ENCODE measurements at regions of chr4 and their contacts with region 1.

Region 1: DNA sequence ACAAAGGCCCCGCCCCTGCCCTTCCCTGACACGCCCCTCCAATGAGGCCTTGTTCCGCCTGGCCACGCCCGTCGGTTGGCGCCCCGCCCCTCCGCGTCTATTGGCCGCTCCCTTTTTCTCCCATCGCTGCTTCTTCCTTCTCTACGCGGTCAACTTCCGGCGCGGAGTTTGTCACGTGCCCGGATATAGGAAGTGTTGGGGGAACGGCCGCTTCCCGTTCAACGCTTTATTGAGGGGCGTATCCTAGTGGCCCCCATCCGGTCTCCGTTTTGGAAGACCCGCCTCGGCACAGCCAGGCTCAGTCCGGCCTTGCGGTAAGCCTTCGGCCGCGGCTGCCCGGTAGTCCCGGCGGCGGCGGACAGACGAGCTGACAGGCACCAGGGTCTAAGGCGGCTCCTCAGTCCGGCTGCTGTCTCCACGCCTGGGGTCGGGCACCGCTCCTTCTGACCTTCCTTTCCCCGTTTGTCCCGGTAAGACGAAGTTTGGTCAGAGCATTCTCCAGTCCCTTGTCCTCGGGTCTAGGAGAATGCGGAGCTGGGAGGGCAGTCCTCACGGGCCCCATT is at the start of gene EXOC1:
- DNase-seq: peak; percentile 93 to 98 (median 94)
- ATAC-seq: peak; percentile 99
- H3K4me3 ChIP-seq: peak within 1 kb of the TSS; percentile 84
- H3K4me3 Mint-ChIP-seq: peak within 1 kb of the TSS in 2 of 10 donors; percentile 34 to 69
- H3K27ac ChIP-seq: peak within 1 kb of the TSS; percentile 87
- H3K27ac Mint-ChIP-seq: peak within 1 kb of the TSS in 7 of 9 donors; percentile 75 to 94 (median 90)
- H3K4me1 ChIP-seq: peaks cover 26 to 31% of the 10 kb centered on the region in 2 donors
- H3K4me1 Mint-ChIP-seq: peaks cover 22 to 48% (median 42%) of the 10 kb centered on the region in 7 donors
- H3K27me3 ChIP-seq: no peaks in the 10 kb centered on the region
- H3K27me3 Mint-ChIP-seq: no peaks in the 10 kb centered on the region
- total RNA-seq, gene EXOC1: 20.3 to 46.7 (median 32.1) TPM

Region 2: DNA sequence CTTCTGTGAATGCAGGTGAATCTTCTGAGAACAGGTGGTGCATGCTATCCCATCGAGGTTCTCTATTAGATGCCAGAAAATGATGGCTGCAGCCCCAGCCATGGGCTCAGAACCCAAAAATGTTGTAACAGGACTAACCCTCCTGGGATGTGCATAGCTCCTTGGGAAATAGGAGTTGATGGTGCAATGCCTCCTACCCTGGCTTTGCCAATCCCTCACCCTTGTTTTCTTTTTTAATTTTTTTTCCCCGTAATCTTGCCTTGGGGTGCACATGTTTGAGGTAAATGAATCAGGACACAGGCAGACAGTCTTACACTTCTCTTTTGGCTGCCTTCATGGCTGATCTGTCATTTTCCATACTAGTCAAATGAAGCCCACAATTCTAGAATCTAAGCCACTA is 1099.2 kb before region 1 on chr4:
- CTCF ChIA-PET with region 1: no interaction called
- POLR2A ChIA-PET with region 1: no interaction called
- intact Hi-C with region 1: no loop called
- DNase-seq: no peak
- ATAC-seq: no peak
- H3K4me3 ChIP-seq: no peak overlapping the region
- H3K4me3 Mint-ChIP-seq: no peak overlapping the region
- H3K27ac ChIP-seq: no peak overlapping the region
- H3K27ac Mint-ChIP-seq: no peak overlapping the region
- H3K4me1 ChIP-seq: no peaks in the 10 kb centered on the region
- H3K4me1 Mint-ChIP-seq: no peaks in the 10 kb centered on the region
- H3K27me3 ChIP-seq: no peaks in the 10 kb centered on the region
- H3K27me3 Mint-ChIP-seq: peaks cover 0 to 3% (median 0%) of the 10 kb centered on the region in 5 donors

Region 3: GRCh38 chr4:55345980-55346850 is 507.4 kb before region 1 on chr4 and contains the start of gene SRD5A3:
- CTCF ChIA-PET with region 1: no interaction called
- POLR2A ChIA-PET with region 1: no interaction called
- intact Hi-C with region 1: loop called (anchors 1 to 2 kb)
- DNase-seq: peak; percentile 53 to 92 (median 72)
- ATAC-seq: peak; percentile 97
- H3K4me3 ChIP-seq: peak within 1 kb of the TSS; percentile 79
- H3K4me3 Mint-ChIP-seq: peak within 1 kb of the TSS; percentile 83 to 94 (median 90)
- H3K27ac ChIP-seq: peak within 1 kb of the TSS; percentile 69
- H3K27ac Mint-ChIP-seq: peak within 1 kb of the TSS; percentile 70 to 91 (median 87)
- H3K4me1 ChIP-seq: peaks cover 6 to 8% of the 10 kb centered on the region in 2 donors
- H3K4me1 Mint-ChIP-seq: peaks cover 8 to 23% (median 19%) of the 10 kb centered on the region in 7 donors
- H3K27me3 ChIP-seq: no peaks in the 10 kb centered on the region
- H3K27me3 Mint-ChIP-seq: no peaks in the 10 kb centered on the region
- total RNA-seq, gene SRD5A3: 1.9 to 8.5 (median 4.5) TPM

Region 4: DNA sequence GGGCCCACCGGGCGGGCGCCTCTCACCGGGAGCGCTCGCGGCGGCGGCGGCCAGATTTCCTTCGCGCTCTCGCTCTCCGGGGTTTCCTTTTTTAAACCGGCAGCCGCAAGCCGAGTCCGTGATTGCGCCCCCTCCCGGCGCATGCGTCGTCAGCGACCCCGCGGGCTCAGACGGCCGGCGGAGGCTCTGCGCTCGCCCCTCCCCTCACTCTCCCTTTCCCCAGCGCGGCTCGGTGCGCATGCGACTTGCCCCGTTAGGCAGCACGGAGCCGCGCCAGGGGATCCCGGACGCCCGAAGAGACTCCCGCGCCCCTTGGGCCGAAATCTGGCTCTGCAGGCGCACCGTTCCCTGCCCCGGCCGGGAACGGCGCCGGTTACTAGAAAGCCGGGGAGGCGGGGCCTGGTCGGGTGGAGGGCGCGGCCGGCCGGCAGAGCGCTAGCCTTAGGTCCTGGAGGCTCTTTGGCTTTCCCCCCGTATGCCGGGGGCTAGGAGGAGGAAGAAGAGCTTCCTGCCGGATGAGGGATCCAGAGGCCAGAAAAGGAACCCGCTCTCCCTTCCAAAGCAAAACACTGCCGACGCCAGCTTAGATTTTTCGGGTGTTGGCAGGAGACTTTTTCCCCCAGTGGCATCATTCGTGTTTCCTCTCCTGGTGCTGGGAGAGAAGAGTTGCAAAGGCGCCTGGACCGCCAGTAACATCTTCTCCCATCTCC is 306.7 kb before region 1 on chr4 and contains the start of gene CLOCK:
- CTCF ChIA-PET with region 1: no interaction called
- POLR2A ChIA-PET with region 1: interaction called, 3 read pairs
- intact Hi-C with region 1: loop called (anchors 1 kb)
- DNase-seq: peak; percentile 79 to 87 (median 83)
- ATAC-seq: peak; percentile 82
- H3K4me3 ChIP-seq: peak within 1 kb of the TSS; percentile 82
- H3K4me3 Mint-ChIP-seq: peak within 1 kb of the TSS; percentile 88 to 96 (median 94)
- H3K27ac ChIP-seq: peak within 1 kb of the TSS; percentile 84
- H3K27ac Mint-ChIP-seq: peak within 1 kb of the TSS; percentile 87 to 92 (median 90)
- H3K4me1 ChIP-seq: peaks cover 5 to 8% of the 10 kb centered on the region in 2 donors
- H3K4me1 Mint-ChIP-seq: peaks cover 21 to 57% (median 40%) of the 10 kb centered on the region in 7 donors
- H3K27me3 ChIP-seq: no peaks in the 10 kb centered on the region
- H3K27me3 Mint-ChIP-seq: peaks cover 0 to 29% (median 0%) of the 10 kb centered on the region in 5 donors
- total RNA-seq, gene CLOCK: 7.9 to 12.6 (median 8.9) TPM

Region 5: GRCh38 chr4:55781812-55782211 is 71.8 kb before region 1 on chr4:
- CTCF ChIA-PET with region 1: no interaction called
- POLR2A ChIA-PET with region 1: no interaction called
- intact Hi-C with region 1: no loop called
- DNase-seq: no peak
- ATAC-seq: no peak
- H3K4me3 ChIP-seq: no peak overlapping the region
- H3K4me3 Mint-ChIP-seq: no peak overlapping the region
- H3K27ac ChIP-seq: no peak overlapping the region
- H3K27ac Mint-ChIP-seq: no peak overlapping the region
- H3K4me1 ChIP-seq: no peaks in the 10 kb centered on the region
- H3K4me1 Mint-ChIP-seq: no peaks in the 10 kb centered on the region
- H3K27me3 ChIP-seq: no peaks in the 10 kb centered on the region
- H3K27me3 Mint-ChIP-seq: peaks cover 0 to 19% (median 7%) of the 10 kb centered on the region in 5 donors

Region 6: GRCh38 chr4:56048702-56049431 is 195.3 kb after region 1 on chr4:
- CTCF ChIA-PET with region 1: no interaction called
- POLR2A ChIA-PET with region 1: no interaction called
- intact Hi-C with region 1: loop called in 1 of 2 experiments (anchors 10 kb)
- DNase-seq: peak in 6 of 9 donors; percentile 7 to 72 (median 16)
- ATAC-seq: peak; percentile 85
- H3K4me3 ChIP-seq: no peak overlapping the region
- H3K4me3 Mint-ChIP-seq: peak overlapping the region; percentile 55 to 78 (median 73)
- H3K27ac ChIP-seq: no peak overlapping the region
- H3K27ac Mint-ChIP-seq: no peak overlapping the region
- H3K4me1 ChIP-seq: peaks cover 3 to 6% of the 10 kb centered on the region in 2 donors
- H3K4me1 Mint-ChIP-seq: peaks cover 8 to 18% (median 12%) of the 10 kb centered on the region in 7 donors
- H3K27me3 ChIP-seq: peaks cover 6 to 10% of the 10 kb centered on the region in 2 donors
- H3K27me3 Mint-ChIP-seq: peaks cover 43 to 64% (median 55%) of the 10 kb centered on the region in 5 donors

Region 7: DNA sequence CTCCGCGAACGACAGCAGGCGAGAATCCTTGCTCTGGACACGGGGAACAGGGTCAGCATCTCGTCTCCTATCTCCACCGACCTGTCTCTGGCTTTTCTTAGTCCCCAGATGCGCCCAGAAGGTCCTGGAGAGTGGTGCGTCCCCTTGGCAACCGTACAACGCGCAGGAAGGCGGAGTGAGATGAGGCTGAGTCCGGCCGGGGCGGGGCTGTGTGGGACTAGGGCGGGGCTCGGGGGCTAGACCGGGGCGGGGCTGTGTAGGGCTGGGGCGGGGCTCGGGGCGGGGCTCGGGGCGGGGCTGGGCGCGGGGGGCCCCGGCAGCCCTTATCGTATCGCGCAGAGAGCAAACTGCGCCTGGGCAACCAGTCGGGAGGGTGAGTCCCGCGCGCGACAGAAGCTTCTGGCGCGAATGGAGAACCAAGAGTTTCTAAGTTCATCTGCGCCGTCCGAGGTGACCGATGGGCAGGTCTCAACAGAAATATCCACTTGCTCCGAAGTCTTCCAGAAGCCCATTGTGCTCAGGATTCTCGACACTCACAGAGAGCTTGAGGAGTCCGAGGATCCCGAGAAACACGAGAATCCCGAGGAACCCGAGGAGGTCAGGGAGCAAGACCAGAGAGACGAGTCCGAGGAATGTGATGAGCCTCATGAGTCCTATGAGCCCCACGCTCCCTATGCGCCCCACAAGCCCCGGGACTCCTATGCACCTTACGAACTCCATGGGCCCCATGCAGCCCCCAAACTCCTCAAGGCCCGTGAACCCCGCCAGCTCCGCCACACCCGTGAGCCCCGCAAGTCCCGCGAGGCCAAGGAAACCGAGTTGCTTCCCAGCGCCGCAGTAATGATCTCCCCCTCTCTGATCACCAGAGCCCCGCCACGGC is 676.9 kb after region 1 on chr4:
- CTCF ChIA-PET with region 1: no interaction called
- POLR2A ChIA-PET with region 1: no interaction called
- intact Hi-C with region 1: loop called in 1 of 2 experiments (anchors 2 kb)
- DNase-seq: peak; percentile 53 to 75 (median 59)
- ATAC-seq: peak; percentile 99
- H3K4me3 ChIP-seq: peak overlapping the region; percentile 91
- H3K4me3 Mint-ChIP-seq: peak overlapping the region in 1 of 10 donors; percentile 70
- H3K27ac ChIP-seq: peak overlapping the region; percentile 44
- H3K27ac Mint-ChIP-seq: peak overlapping the region in 3 of 9 donors; percentile 26 to 55 (median 38)
- H3K4me1 ChIP-seq: peaks cover 0 to 4% of the 10 kb centered on the region in 2 donors
- H3K4me1 Mint-ChIP-seq: peaks cover 0 to 2% (median 0%) of the 10 kb centered on the region in 7 donors
- H3K27me3 ChIP-seq: peaks cover 0 to 4% of the 10 kb centered on the region in 2 donors
- H3K27me3 Mint-ChIP-seq: peaks cover 0 to 22% (median 7%) of the 10 kb centered on the region in 5 donors

Measured in naive thymus-derived CD4-positive, alpha-beta T cell (primary cell).